ENCODE measurements at regions of chr4 and their contacts with region 1.

Region 1: DNA sequence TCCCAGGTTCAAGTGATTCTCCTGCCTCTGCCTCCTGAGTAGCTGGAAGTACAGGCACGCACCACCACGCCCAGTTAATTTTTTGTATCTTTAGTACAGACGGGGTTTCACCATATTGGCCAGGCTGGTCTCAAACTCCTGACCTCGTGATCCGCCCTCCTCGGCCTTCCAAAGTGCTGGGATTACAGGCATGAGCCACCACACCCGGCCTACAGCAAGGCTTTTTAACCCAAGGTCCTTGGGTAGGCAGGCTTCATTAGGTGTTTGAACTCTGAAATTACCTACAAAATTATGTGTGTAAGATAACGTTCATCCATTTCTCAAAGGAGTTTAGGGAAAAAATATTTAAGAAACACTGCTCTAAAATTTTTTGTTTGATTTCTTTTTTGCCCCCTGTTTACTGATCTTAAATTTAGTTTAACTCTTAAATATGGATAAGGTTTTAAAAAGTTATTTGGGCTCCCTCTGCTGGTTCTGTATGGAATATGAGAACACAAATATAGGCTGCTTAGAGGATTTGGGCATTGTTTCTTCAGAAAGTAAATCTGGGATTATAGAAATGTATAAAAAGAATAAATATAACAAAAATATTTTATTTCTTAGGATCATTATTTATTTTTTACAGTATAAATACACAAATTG is 92.8 kb downstream of the CBR4 start:
- DNase-seq: no peak
- H3K4me3 ChIP-seq: no peak overlapping the region
- H3K27ac ChIP-seq: peak overlapping the region in 3 of 8 donors; percentile 11 to 46 (median 26)
- H3K4me1 ChIP-seq: peaks cover 0 to 3% (median 0%) of the 10 kb centered on the region in 6 donors
- H3K27me3 ChIP-seq: no peaks in the 10 kb centered on the region
- CTCF ChIP-seq: peak in 8 of 11 experiments; percentile 9 to 66 (median 54)
- POLR2A ChIP-seq: no peak

Region 2: DNA sequence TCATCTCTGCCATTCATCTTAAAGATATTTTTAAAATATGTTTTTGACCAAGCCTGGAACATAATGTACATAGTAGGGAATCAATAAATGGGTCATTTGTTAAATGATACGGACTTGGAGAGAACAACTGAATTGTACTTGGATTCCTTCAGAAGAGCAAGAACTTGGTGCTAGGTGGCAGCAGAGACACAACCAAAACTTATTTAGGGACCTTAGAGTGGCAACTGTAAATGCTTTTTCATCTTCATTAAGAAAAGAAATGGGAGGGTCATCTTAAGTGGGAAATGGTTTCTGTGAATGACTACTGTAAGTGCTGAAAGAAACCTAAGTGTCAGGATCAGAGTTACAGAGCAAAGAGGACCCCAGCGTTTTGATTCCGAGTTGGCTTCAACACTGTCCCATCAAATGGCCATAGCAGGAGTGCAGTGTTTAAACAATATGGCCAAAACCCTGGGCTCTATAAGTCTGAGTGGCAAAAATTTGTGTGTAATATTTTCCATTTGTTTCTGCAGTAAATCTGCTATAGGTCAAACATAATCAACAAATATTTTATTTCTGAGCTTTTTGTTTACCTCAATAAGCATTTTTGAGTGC is 206.8 kb before region 1 on chr4:
- intact Hi-C with region 1: loop called (anchors 10 kb)
- DNase-seq: no peak
- H3K4me3 ChIP-seq: no peak overlapping the region
- H3K27ac ChIP-seq: peak overlapping the region in 3 of 8 donors; percentile 50 to 61 (median 56)
- H3K4me1 ChIP-seq: peaks cover 0 to 22% (median 9%) of the 10 kb centered on the region in 6 donors
- H3K27me3 ChIP-seq: no peaks in the 10 kb centered on the region
- CTCF ChIP-seq: peak in 10 of 11 experiments; percentile 22 to 63 (median 44)
- POLR2A ChIP-seq: no peak